ENCODE measurements at regions of chr10 and their contacts with region 1.

Region 1: DNA sequence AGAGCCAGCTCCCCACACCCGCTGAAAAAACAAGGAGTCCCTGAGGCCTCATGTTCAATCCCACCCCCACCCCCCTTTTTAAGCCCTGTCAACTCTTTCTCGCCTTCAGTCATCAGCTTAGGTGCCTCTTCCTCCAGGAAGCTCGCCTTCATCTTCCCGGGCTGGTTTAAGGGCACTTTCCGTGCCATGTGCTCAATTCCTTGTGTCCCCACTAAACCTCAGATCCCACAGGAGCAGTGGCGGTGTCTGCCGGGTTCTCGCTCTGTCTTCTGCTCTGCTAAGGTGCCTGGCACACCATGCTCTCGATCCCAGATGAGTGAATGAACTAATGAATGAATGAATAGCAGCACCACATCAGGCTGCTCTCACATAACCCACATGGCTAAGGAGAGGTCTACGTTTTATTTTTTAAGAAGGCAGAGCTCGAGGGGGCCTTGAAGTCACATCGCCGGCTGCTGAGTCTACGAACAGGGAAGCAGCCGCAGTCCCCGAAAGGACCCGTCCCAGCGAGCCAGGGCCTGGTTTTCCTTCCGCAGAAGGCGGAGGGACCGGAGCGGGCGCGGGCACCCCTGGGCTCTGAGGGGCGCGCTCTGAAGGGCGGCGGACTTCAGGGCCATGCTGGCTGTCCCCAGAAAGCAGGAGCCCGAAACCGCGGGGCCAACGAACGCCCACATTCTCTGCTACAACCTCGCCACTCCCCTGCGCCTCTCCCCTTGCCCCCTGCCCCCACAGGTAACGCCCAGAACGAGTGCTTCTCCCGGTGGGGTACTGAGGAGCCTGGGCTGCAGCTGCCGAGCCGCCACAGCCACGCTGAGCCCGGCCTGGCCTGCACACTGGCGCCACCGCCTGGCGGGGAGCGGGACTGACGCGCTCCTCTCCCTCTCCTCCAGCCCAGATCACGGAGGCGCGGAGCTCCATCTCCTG is 73.4 kb upstream of the KCNMA1 start:
- DNase-seq: peak; percentile 76
- H3K4me3 Mint-ChIP-seq: peak overlapping the region; percentile 44
- H3K27ac Mint-ChIP-seq: no peak overlapping the region
- H3K4me1 Mint-ChIP-seq: peaks cover 3% of the 10 kb centered on the region
- H3K27me3 Mint-ChIP-seq: peaks cover 42% of the 10 kb centered on the region

Region 2: DNA sequence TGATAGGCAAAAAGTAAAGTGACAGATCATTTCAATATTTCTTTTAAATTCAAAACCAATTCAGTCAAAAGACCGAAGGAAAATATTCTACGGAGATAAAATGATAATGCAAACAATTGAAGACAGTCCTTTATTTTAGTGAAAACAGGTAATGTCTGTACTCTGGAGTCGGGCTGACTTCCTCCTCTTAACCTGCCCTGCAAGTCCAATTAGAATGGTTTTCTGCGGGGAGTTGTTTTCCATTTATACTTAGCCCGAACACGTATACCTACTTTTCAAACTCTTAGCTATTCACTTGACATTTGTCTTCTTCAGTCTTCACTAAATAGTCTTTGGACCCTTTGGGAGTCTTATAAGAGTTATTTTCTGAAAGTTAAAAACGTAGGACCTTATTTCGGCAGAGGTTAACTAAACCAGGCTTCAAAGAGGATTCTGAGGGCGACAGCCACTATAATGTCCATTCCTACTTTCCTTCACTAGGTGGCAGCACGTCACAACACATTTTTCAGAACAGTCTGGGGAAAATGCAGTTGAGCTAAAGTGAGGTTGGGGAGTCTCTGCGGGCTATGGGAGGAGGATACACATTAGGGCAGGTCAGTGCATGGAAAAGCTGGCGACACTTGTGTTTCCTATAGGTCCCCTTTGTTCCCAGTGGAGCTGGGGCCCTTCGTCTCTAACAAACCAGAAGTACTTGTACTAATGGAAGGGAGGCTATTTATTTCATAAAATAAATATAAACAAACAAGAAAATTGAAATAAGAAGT is 545.4 kb before region 1 on chr10:
- CTCF ChIA-PET with region 1: interaction called, 18 read pairs
- DNase-seq: peak; percentile 42
- H3K4me3 Mint-ChIP-seq: no peak overlapping the region
- H3K27ac Mint-ChIP-seq: no peak overlapping the region
- H3K4me1 Mint-ChIP-seq: no peaks in the 10 kb centered on the region
- H3K27me3 Mint-ChIP-seq: peaks cover 14% of the 10 kb centered on the region

Region 3: GRCh38 chr10:77173615-77174461 is 537.2 kb before region 1 on chr10:
- CTCF ChIA-PET with region 1: interaction called, 35 read pairs
- DNase-seq: peak; percentile 77
- H3K4me3 Mint-ChIP-seq: no peak overlapping the region
- H3K27ac Mint-ChIP-seq: no peak overlapping the region
- H3K4me1 Mint-ChIP-seq: no peaks in the 10 kb centered on the region
- H3K27me3 Mint-ChIP-seq: peaks cover 6% of the 10 kb centered on the region

Region 4: DNA sequence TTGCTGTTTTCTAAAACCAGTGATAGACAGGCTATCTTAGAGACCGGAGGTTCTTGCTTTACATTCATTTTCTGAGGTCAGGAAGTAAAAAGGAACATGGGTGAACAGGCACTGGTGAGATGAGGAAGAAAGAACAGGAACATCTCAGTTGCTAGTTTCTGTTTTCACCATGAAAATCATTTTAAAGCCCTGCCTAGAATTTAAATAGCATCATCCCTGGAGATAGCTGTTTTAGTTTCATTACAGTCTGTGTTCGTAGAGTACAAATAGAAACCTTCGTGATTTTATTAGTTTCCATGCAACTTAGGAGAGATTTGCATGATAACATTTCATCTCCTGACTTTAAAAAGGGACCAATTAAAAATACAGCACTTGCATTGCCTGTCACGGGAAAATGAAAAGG is 88.1 kb before region 1 on chr10:
- CTCF ChIA-PET with region 1: no interaction called
- DNase-seq: no peak
- H3K4me3 Mint-ChIP-seq: no peak overlapping the region
- H3K27ac Mint-ChIP-seq: no peak overlapping the region
- H3K4me1 Mint-ChIP-seq: no peaks in the 10 kb centered on the region
- H3K27me3 Mint-ChIP-seq: peaks cover 6% of the 10 kb centered on the region

Region 5: GRCh38 chr10:77721815-77722214 is 10.8 kb after region 1 on chr10:
- CTCF ChIA-PET with region 1: interaction called, 11 read pairs
- DNase-seq: no peak
- H3K4me3 Mint-ChIP-seq: no peak overlapping the region
- H3K27ac Mint-ChIP-seq: no peak overlapping the region
- H3K4me1 Mint-ChIP-seq: no peaks in the 10 kb centered on the region
- H3K27me3 Mint-ChIP-seq: peaks cover 8% of the 10 kb centered on the region

Region 6: DNA sequence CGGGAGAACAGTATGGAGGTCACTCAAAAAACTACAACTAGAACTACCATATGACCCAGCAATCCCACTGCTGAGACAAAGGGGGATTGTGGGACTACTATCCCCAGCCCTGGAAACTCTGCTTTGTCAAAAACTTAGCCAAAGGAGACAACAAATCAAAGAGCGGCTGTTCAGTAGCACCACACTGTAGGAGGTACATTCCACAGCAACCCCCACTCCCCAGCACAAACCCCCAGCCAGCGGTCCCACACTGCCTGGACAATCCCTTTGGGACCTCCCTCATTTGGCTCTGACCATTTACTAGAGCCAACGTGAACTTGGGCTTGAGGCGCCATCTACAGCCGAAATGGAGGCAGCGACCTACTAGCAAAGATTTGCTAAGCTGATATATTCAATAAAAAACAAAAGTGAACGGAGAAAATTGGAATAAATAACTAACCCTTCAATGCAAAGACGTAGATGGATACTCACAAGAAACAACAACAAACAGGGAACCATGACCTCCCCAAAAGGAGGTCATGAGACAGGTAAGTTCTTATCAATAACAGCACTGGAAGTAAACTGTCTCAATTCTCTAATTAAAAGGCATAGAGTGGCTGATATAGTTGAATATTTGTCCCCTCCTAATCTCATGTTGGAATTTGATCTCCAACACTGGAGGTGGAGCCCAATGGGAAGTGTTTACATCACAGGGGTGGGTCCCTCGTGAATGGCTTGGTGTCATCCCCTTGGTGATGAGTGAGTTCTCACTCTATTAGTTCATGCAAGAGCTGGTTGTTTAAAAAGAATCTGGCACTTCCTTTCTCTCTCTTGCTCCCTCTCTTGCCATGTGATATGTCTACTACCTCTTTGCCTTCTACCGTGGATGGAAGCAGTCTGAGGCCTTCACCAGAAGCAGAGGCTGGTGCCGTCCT is 45.6 kb after region 1 on chr10:
- CTCF ChIA-PET with region 1: interaction called, 11 read pairs
- DNase-seq: peak; percentile 37
- H3K4me3 Mint-ChIP-seq: no peak overlapping the region
- H3K27ac Mint-ChIP-seq: no peak overlapping the region
- H3K4me1 Mint-ChIP-seq: no peaks in the 10 kb centered on the region
- H3K27me3 Mint-ChIP-seq: peaks cover 7% of the 10 kb centered on the region

Region 7: DNA sequence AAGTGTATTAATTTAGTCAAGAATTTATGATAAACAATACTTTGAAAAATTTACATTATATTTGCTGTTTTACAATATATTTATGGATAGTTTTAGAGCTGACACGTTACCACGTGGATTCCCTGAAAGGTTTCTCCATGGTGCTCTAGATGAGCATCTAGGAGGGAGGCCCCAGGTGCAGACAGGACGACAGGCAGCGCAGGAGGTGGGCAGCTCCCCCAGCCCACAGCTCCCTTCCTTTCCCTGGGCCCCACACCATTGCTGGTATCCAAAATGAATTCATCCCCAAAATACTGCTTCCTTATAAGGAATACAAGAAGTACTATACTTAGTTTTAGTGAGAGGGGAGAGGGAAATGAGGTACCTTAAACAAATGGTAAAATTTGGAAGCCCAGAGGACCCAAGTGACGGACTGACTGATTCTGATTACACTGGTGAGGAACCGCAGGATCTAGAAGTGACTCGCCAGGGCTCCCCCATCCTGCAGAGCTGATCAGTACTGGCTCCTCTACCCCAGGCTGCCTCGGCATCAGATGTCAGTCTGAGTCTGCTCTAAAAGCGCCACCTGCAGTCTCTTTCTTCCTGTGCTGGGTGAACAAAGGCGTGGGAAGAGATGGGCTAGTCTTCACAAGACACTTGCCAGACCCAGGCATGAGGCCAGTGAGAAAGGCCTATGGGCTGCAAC is 126.4 kb after region 1 on chr10:
- CTCF ChIA-PET with region 1: interaction called, 101 read pairs
- DNase-seq: peak; percentile 77
- H3K4me3 Mint-ChIP-seq: no peak overlapping the region
- H3K27ac Mint-ChIP-seq: peak overlapping the region; percentile 83
- H3K4me1 Mint-ChIP-seq: peaks cover 18% of the 10 kb centered on the region
- H3K27me3 Mint-ChIP-seq: no peaks in the 10 kb centered on the region